CD4-positive, alpha-beta T cell (primary cell): ENCODE measurements at regions of chr5 and their contacts with region 1.

Region 1: GRCh38 chr5:180860887-180861822 is at the start of gene ZFP62:
- DNase-seq: peak; percentile 78 to 94 (median 85)
- ATAC-seq: peak; percentile 73
- H3K4me3 ChIP-seq: peak within 1 kb of the TSS; percentile 89
- H3K4me3 Mint-ChIP-seq: peak within 1 kb of the TSS; percentile 95
- H3K27ac ChIP-seq: peak within 1 kb of the TSS; percentile 85 to 88
- H3K27ac Mint-ChIP-seq: peak within 1 kb of the TSS; percentile 95
- H3K4me1 ChIP-seq: peaks cover 10% of the 10 kb centered on the region
- H3K4me1 Mint-ChIP-seq: peaks cover 27% of the 10 kb centered on the region
- H3K27me3 ChIP-seq: no peaks in the 10 kb centered on the region
- H3K27me3 Mint-ChIP-seq: peaks cover 5% of the 10 kb centered on the region
- CTCF ChIP-seq: peak; percentile 50
- total RNA-seq, gene ZFP62: 22.6 to 24.9 TPM

Region 2: DNA sequence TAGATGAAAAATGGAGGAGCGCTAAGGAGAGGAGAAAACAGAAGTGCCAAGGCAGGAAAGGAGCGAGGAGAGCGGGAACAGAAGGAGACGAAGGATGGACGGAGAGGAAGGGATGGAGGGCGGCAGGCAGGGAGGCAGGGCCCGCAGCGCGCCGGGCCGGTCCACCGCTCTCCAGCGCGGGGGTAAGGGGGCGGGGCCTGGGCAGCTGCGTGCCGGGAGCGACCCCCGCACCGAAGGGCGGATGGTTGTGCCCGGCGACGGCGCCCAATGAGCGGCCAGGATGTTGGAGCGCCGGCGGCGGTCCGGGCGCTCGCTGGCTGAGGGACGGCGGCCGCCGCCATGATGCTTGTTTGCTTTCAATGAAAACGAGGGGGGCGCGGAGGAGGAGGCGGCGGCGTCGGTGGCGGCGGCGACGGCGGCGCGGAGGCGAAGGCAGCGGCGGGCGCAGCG is 367.1 kb before region 1 on chr5 and contains the start of gene CNOT6:
- CTCF ChIA-PET with region 1: no interaction called
- POLR2A ChIA-PET with region 1: no interaction called
- intact Hi-C with region 1: loop called in 1 of 2 experiments (anchors 2 kb)
- DNase-seq: peak; percentile 89 to 99 (median 94)
- ATAC-seq: peak; percentile 88
- H3K4me3 ChIP-seq: peak within 1 kb of the TSS; percentile 73
- H3K4me3 Mint-ChIP-seq: peak within 1 kb of the TSS; percentile 100
- H3K27ac ChIP-seq: peak within 1 kb of the TSS; percentile 60 to 83
- H3K27ac Mint-ChIP-seq: peak within 1 kb of the TSS; percentile 98
- H3K4me1 ChIP-seq: peaks cover 34% of the 10 kb centered on the region
- H3K4me1 Mint-ChIP-seq: peaks cover 40% of the 10 kb centered on the region
- H3K27me3 ChIP-seq: no peaks in the 10 kb centered on the region
- H3K27me3 Mint-ChIP-seq: no peaks in the 10 kb centered on the region
- CTCF ChIP-seq: no peak
- total RNA-seq, gene CNOT6: 12.5 to 13.8 TPM

Region 3: GRCh38 chr5:180784497-180785097 is 76.6 kb before region 1 on chr5:
- CTCF ChIA-PET with region 1: interaction called, 9 read pairs
- POLR2A ChIA-PET with region 1: interaction called, 3 read pairs
- intact Hi-C with region 1: loop called (anchors 5 kb)
- DNase-seq: peak; percentile 59 to 86 (median 74)
- ATAC-seq: peak; percentile 90
- H3K4me3 ChIP-seq: no peak overlapping the region
- H3K4me3 Mint-ChIP-seq: no peak overlapping the region
- H3K27ac ChIP-seq: no peak overlapping the region
- H3K27ac Mint-ChIP-seq: peak overlapping the region; percentile 85
- H3K4me1 ChIP-seq: peaks cover 31% of the 10 kb centered on the region
- H3K4me1 Mint-ChIP-seq: peaks cover 45% of the 10 kb centered on the region
- H3K27me3 ChIP-seq: no peaks in the 10 kb centered on the region
- H3K27me3 Mint-ChIP-seq: no peaks in the 10 kb centered on the region
- CTCF ChIP-seq: peak; percentile 69

Region 4: GRCh38 chr5:181243512-181244343 is 382.6 kb after region 1 on chr5 and contains the start of gene RACK1:
- CTCF ChIA-PET with region 1: no interaction called
- POLR2A ChIA-PET with region 1: no interaction called
- intact Hi-C with region 1: loop called in 1 of 2 experiments (anchors 5 kb)
- DNase-seq: peak; percentile 84 to 95 (median 88)
- ATAC-seq: peak; percentile 75
- H3K4me3 ChIP-seq: peak within 1 kb of the TSS; percentile 94
- H3K4me3 Mint-ChIP-seq: peak within 1 kb of the TSS; percentile 95
- H3K27ac ChIP-seq: peak within 1 kb of the TSS; percentile 81 to 90
- H3K27ac Mint-ChIP-seq: peak within 1 kb of the TSS; percentile 96
- H3K4me1 ChIP-seq: peaks cover 87% of the 10 kb centered on the region
- H3K4me1 Mint-ChIP-seq: peaks cover 76% of the 10 kb centered on the region
- H3K27me3 ChIP-seq: no peaks in the 10 kb centered on the region
- H3K27me3 Mint-ChIP-seq: no peaks in the 10 kb centered on the region
- CTCF ChIP-seq: no peak
- total RNA-seq, gene RACK1: 2,499 to 2,682 TPM